H1 (cell line): ENCODE measurements at regions of chr19 and their contacts with region 1.

Region 1: GRCh38 chr19:7618771-7619514 is 10.4 kb downstream of the XAB2 start:
- DNase-seq: no peak
- H3K4me3 ChIP-seq: no peak overlapping the region
- H3K27ac ChIP-seq: no peak overlapping the region
- H3K4me1 ChIP-seq: no peaks in the 10 kb centered on the region
- H3K27me3 ChIP-seq: no peaks in the 10 kb centered on the region
- CTCF ChIP-seq: no peak
- EP300 ChIP-seq: no peak
- POLR2A ChIP-seq: no peak
- RAD21 ChIP-seq: no peak

Region 2: GRCh38 chr19:7515645-7516151 is 103.2 kb before region 1 on chr19 and contains the start of gene ZNF358:
- CTCF ChIA-PET with region 1: no interaction called
- POLR2A ChIA-PET with region 1: no interaction called
- DNase-seq: peak in 1 of 2 experiments; percentile 88
- H3K4me3 ChIP-seq: peak within 1 kb of the TSS; percentile 72 to 95 (median 77)
- H3K27ac ChIP-seq: peak within 1 kb of the TSS; percentile 29; the same call in 1 of the 2 replicates
- H3K4me1 ChIP-seq: peaks cover 0 to 11% (median 6%) of the 10 kb centered on the region in 4 experiments; a peak in 5 of 7 replicates
- H3K27me3 ChIP-seq: no peaks in the 10 kb centered on the region
- CTCF ChIP-seq: no peak
- EP300 ChIP-seq: no peak
- POLR2A ChIP-seq: peak in 1 of 2 experiments; percentile 52; a peak in 1 of 3 replicates
- RAD21 ChIP-seq: no peak
- total RNA-seq, gene ZNF358: 40.0 and 44.0 TPM in 2 replicates

Region 3: GRCh38 chr19:7605490-7606222 is 13.3 kb before region 1 on chr19:
- CTCF ChIA-PET with region 1: interaction called, 3 read pairs
- POLR2A ChIA-PET with region 1: interaction called, 29 read pairs
- DNase-seq: peak; percentile 65 to 86
- H3K4me3 ChIP-seq: no peak overlapping the region
- H3K27ac ChIP-seq: no peak overlapping the region
- H3K4me1 ChIP-seq: no peaks in the 10 kb centered on the region; a peak in 3 of 7 replicates
- H3K27me3 ChIP-seq: no peaks in the 10 kb centered on the region
- CTCF ChIP-seq: no peak
- EP300 ChIP-seq: no peak
- POLR2A ChIP-seq: no peak
- RAD21 ChIP-seq: no peak

Region 4: GRCh38 chr19:7629347-7630054 is 10.6 kb after region 1 on chr19 and contains the starts of genes PET100 and XAB2:
- CTCF ChIA-PET with region 1: no interaction called
- POLR2A ChIA-PET with region 1: interaction called, 34 read pairs
- DNase-seq: peak; percentile 95 to 96
- H3K4me3 ChIP-seq: peak within 1 kb of the TSS; percentile 94 to 100 (median 99)
- H3K27ac ChIP-seq: peak within 1 kb of the TSS; percentile 88
- H3K4me1 ChIP-seq: peaks cover 0 to 10% (median 3%) of the 10 kb centered on the region in 4 experiments; a peak in 4 of 7 replicates
- H3K27me3 ChIP-seq: no peaks in the 10 kb centered on the region; a peak in 2 of 7 replicates
- CTCF ChIP-seq: no peak
- EP300 ChIP-seq: no peak
- POLR2A ChIP-seq: peak; percentile 64 to 77; a peak in 2 of 3 replicates
- RAD21 ChIP-seq: no peak
- total RNA-seq, gene PET100: 105 and 127 TPM in 2 replicates
- total RNA-seq, gene XAB2: 49.4 and 51.4 TPM in 2 replicates

Region 5: DNA sequence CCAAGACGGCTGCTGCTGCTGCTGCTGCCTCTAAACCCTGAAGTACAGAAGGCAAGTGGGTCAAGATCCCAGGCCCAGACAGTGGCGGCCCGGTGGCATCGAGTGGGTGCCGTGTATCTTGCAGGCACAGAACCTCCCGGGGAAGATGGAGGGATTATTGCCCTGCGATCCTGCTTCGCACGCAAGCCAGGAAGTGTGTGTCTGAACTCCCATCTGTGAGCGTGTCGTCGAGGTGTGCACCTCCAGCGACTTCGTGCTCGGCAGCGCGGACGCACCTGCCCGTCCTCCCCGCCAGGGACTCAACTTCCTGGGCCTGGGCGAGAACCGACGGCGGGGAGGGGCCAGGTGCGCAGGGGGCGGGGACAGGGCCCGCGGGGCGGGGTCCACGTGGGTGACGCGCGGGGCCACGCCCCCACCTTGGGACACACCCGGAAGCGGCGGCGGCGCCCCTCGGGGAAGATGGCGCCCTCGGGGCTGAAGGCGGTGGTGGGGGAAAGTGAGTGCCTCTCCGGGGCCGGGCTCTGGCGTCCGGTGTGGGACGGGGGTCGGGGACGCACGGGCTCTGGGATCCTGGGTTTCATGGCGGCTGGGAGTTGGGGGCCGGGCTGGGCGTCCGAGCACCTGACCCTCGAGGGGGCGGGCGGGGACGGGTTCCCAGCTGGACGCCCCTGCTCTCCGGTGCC is 17.9 kb after region 1 on chr19 and contains the start of gene STXBP2:
- CTCF ChIA-PET with region 1: interaction called, 4 read pairs
- POLR2A ChIA-PET with region 1: interaction called, 34 read pairs
- DNase-seq: peak; percentile 64 to 97
- H3K4me3 ChIP-seq: peak within 1 kb of the TSS; percentile 67 to 88 (median 68)
- H3K27ac ChIP-seq: 0 out of 2 replicates have a peak within 1 kb of the TSS, but pooled peaks have one; percentile 23
- H3K4me1 ChIP-seq: peaks cover 0 to 6% (median under 1%) of the 10 kb centered on the region in 4 experiments; a peak in 3 of 7 replicates
- H3K27me3 ChIP-seq: peaks cover 3 to 19% (median 16%) of the 10 kb centered on the region in 4 experiments
- CTCF ChIP-seq: peak in 1 of 3 experiments; percentile 6; a peak in 1 of 4 replicates
- EP300 ChIP-seq: no peak
- POLR2A ChIP-seq: peak in 1 of 2 experiments; percentile 69; a peak in 1 of 3 replicates
- RAD21 ChIP-seq: peak in 1 of 2 experiments; percentile 16; a peak in 1 of 4 replicates
- total RNA-seq, gene STXBP2: 51.5 and 52.9 TPM in 2 replicates

Region 6: DNA sequence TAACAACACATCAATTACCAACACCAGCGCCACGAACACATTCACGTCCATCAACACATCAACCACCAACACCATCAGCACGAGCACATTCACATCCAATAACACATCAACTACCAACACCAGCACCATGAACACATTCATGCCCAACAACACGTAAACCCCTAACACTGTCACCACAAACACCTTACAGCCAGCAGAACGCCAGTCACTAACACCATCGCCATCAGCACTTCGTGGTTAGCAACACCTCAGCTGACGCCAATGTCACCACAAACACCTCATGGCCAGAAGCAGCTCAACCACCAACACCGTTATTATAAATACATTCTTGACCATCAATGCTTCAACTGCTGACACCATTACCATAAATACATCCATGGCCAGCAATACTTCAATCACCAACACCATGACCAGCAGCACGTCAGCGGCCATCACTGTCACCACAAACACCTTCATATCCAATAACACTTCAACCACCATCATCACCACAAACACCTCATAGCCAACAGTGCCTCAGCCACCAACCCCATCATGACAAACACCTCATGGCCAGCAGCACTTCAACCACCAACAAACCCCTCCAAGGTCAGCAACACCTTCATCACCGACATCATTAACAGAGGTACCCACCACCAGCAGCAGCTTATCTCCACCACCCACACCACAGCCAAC is 73.6 kb after region 1 on chr19:
- CTCF ChIA-PET with region 1: no interaction called
- POLR2A ChIA-PET with region 1: no interaction called
- DNase-seq: no peak
- H3K4me3 ChIP-seq: no peak overlapping the region
- H3K27ac ChIP-seq: no peak overlapping the region
- H3K4me1 ChIP-seq: peaks cover 0 to 10% (median 4%) of the 10 kb centered on the region in 4 experiments; a peak in 4 of 7 replicates
- H3K27me3 ChIP-seq: no peaks in the 10 kb centered on the region; a peak in 2 of 7 replicates
- CTCF ChIP-seq: no peak
- EP300 ChIP-seq: no peak
- POLR2A ChIP-seq: no peak
- RAD21 ChIP-seq: no peak

Region 7: DNA sequence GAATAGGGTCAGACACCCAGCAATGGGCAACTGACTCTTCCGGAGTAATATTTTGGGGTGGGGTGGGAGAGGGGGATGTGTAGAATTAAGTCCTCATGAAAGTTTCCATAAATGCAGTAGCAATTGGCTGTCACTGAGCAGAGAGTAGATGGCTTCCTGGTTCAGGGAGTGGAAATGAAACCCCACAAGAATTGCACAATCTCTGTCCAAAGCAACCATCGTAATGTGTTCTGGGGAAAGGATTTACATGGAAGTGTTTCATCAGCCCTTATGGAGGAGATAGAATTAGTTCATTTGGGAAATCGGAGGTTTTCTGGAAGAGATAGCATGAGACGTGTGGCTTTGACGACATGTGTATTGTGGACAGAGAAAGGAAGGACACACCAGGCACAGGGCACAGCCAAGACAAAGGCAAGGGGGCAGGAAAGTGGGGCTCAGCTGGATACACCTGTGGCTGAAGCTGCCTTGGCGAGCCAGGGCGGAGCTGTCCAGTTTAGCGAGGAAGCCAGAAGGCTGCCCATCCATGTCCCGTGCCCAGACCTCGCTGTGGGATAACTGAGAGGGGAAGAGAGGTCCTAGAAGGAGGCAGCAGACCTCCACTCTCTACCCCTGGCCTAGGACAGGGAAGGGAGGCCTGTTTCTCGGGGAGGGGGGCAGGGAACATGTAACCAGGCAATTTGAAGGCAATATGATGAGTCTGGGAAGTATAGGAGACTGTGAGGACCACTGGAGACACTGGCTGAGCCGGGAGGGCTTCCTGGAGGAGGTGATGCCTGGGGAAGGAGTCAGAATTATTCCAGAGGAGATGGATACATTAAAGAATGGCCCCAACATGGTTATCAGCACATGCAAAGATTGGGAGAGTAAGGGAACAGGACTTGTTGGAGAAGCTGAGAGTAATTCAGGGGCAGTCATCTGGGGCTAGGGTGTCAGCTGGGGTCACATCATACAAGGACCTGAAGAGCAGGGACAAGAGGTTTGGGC is 115.6 kb after region 1 on chr19:
- CTCF ChIA-PET with region 1: no interaction called
- POLR2A ChIA-PET with region 1: no interaction called
- DNase-seq: no peak
- H3K4me3 ChIP-seq: no peak overlapping the region
- H3K27ac ChIP-seq: no peak overlapping the region
- H3K4me1 ChIP-seq: peaks cover 3 to 9% (median 6%) of the 10 kb centered on the region in 4 experiments; a peak in 6 of 7 replicates
- H3K27me3 ChIP-seq: peaks cover 18 to 31% (median 25%) of the 10 kb centered on the region in 4 experiments
- CTCF ChIP-seq: no peak
- EP300 ChIP-seq: no peak
- POLR2A ChIP-seq: no peak
- RAD21 ChIP-seq: no peak